HEK293 (cell line): ENCODE measurements at regions of chr1 and their contacts with region 1.

Region 1: GRCh38 chr1:33094971-33095604 is 14.1 kb downstream of the AZIN2 start:
- H3K4me3 ChIP-seq: no peak overlapping the region
- H3K27ac ChIP-seq: no peak overlapping the region
- H3K4me1 ChIP-seq: no peaks in the 10 kb centered on the region
- CTCF ChIP-seq: peak; percentile 67; the same call in 1 of the 2 replicates

Region 2: DNA sequence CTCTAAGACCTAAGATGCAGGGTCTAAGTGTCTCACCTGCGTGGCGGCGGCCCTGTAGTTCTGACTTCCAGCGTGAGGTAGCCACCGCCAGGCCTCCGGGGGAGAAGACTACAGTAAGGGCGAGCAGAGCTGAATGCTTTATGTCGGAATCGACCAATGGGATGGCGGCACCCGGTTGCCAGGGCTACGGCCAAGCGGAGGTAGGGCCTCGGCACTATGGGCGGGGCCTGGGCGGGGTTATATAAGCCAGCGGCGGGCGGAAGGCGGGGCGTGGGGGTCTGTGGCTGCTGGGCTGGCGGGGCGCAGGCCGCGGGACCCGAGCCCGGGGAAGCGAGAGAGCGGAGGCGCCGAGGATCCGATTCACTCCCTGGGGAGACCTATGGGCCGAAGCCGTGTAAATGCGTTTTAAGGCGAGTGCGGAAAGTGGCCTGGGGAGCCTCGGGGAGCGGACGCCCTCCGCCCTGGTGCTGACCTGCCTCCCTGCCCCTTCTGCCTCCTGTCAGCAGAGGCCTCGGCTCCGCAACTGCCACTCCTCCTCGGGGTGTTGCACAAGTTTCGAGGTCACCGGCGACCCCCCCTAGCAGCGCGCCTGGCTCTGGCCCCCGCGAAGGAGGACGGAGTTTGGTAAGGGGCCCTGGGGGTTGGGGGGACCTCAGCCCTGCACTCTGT is 14.1 kb before region 1 on chr1 and contains the start of gene AZIN2:
- CTCF ChIA-PET with region 1: interaction called, 17 read pairs
- POLR2A ChIA-PET with region 1: interaction called, 5 read pairs
- H3K4me3 ChIP-seq: peak within 1 kb of the TSS; percentile 69
- H3K27ac ChIP-seq: no peak within 1 kb of the TSS; the same call in 1 of the 2 replicates
- H3K4me1 ChIP-seq: no peaks in the 10 kb centered on the region
- CTCF ChIP-seq: no peak

Region 3: DNA sequence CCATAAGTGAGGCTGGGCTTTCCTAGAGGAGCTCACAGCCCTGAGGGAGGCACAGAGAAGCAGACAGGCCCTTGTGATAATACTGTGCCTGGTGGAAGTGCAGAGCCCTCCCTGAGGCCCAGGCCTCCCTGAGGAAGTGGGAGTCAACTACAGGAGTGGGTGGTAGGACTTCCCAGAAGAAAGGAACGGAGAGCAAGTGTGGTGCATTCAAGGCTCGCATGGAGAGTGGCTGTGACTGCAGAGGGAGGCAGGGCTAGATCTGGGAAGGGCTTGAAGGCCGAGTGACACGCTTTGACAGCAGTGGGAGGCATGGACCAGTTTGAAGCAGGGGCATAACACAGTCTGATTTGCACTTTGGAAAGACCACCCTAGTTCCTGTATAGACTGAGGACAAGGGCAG is 23.2 kb after region 1 on chr1:
- CTCF ChIA-PET with region 1: interaction called, 13 read pairs
- POLR2A ChIA-PET with region 1: no interaction called
- H3K4me3 ChIP-seq: no peak overlapping the region
- H3K27ac ChIP-seq: no peak overlapping the region
- H3K4me1 ChIP-seq: no peaks in the 10 kb centered on the region
- CTCF ChIP-seq: no peak

Region 4: DNA sequence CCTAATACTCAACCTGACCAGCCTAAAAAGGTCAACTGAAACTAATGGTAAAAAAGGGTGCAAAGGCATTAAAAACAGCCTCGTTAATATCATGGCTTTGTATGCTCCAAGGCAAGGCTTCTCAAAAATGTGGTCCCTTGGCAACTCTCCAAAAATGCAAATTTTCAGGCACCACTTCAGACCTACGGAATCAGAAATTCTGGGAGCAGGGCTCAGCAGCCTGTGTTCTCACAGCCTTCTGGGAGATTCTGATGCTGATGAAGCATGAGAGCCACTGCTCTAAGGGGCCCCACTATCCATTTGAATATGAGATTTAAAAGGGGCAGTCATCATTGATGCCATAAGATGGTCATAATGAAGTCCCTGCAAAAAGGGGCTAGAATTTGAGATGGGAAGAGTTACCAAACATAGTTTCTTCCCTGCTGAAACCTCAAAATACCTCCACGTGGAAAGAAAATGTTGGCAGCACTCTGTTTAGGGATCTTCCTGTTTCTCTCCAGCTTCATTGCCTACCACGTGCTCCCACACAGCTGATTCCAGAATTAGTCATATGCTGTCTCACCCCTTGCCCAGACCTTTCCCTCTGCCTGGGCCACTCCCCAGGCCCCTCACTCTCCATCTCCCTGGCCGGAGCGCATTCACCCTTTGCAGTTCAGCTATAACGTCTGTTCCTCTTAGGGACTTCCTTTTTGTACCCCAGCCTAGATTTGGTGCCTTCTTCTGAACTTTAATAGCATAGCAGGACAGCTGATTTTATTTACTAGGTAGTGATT is 289.1 kb after region 1 on chr1:
- CTCF ChIA-PET with region 1: no interaction called
- POLR2A ChIA-PET with region 1: no interaction called
- H3K4me3 ChIP-seq: no peak overlapping the region
- H3K27ac ChIP-seq: no peak overlapping the region
- H3K4me1 ChIP-seq: peaks cover 4% of the 10 kb centered on the region; the same call in 1 of the 2 replicates
- CTCF ChIP-seq: no peak